PC-3 (cell line): ENCODE measurements at regions of chr3 and their contacts with region 1.

Region 1: DNA sequence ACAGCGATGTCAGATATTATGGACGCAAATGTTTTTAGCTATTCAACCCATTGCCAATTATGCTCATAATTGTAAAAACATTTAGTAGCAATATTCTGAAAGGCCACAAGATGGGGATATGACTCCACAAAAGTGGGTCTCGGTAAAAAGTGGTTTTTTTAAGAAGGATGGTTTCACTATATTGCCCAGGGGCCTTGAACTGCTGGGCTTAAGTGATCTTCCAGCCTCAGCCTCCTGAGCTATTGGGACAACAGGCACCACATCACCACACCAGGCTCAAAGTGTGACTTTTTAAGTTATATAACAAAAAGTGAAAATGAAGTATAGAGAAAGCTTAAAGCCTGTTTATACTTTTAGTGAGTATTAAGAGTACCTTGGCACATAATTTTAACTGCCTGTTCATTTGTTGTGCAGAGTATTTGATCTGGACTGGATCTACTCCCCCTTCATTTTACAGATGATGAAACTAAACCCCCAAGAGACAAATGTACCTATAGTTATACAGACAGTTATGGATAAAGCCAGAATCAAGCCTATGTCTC is 9.4 kb downstream of the NAA50 start:
- DNase-seq: peak; percentile 85
- ATAC-seq: peak; percentile 77
- H3K4me3 ChIP-seq: no peak overlapping the region
- H3K27ac ChIP-seq: no peak overlapping the region
- H3K4me1 ChIP-seq: no peaks in the 10 kb centered on the region
- H3K27me3 ChIP-seq: no peaks in the 10 kb centered on the region
- CTCF ChIP-seq: peak; percentile 83

Region 2: DNA sequence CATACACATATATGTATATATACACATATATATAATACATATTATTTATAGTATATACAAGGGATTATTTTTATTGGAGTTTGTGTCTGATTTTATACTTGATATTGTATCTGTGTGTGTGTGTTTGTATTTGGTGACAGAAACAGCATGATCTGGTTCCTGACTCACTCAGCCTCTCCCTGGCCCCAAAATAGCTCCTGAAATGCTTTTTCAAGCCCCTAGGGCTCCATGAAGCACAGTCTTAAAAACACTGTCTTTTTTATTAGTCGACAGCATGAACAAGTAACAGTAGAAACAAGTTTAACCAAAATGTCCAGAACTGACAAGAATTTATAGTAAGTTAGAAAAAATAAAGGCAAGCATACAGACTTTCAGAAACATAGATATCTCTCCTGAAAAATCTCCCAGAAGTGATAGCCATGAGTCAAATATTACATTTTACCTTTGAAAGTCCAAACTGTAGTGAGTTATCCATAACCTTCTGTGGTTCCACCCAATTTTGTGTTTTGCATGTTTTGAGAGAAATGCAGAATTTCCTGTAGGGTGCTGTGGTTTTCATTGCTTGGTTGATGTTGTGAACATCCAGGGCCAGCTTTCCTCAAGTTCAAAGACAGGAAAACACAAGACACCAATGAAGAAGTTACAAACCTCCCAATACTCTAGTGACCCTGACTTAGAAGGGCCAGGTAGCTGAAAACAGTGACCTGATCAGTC is 997.2 kb before region 1 on chr3:
- CTCF ChIA-PET with region 1: no interaction called
- POLR2A ChIA-PET with region 1: no interaction called
- intact Hi-C with region 1: no loop called
- DNase-seq: peak; percentile 63
- ATAC-seq: peak; percentile 49
- H3K4me3 ChIP-seq: no peak overlapping the region
- H3K27ac ChIP-seq: peak overlapping the region; percentile 5; the same call in 1 of the 2 replicates
- H3K4me1 ChIP-seq: peaks cover 14% of the 10 kb centered on the region
- H3K27me3 ChIP-seq: no peaks in the 10 kb centered on the region
- CTCF ChIP-seq: no peak

Region 3: GRCh38 chr3:113514265-113514769 is 222.3 kb before region 1 on chr3:
- CTCF ChIA-PET with region 1: no interaction called
- POLR2A ChIA-PET with region 1: no interaction called
- intact Hi-C with region 1: no loop called
- DNase-seq: no peak
- ATAC-seq: no peak; the same call in 1 of the 2 replicates
- H3K4me3 ChIP-seq: peak overlapping the region; percentile 89
- H3K27ac ChIP-seq: peak overlapping the region; percentile 81
- H3K4me1 ChIP-seq: peaks cover 19% of the 10 kb centered on the region
- H3K27me3 ChIP-seq: no peaks in the 10 kb centered on the region
- CTCF ChIP-seq: no peak

Region 4: GRCh38 chr3:113696658-113697499 is 39.7 kb before region 1 on chr3:
- CTCF ChIA-PET with region 1: no interaction called
- POLR2A ChIA-PET with region 1: no interaction called
- intact Hi-C with region 1: no loop called
- DNase-seq: peak; percentile 99
- ATAC-seq: peak; percentile 82
- H3K4me3 ChIP-seq: peak overlapping the region; percentile 73
- H3K27ac ChIP-seq: no peak overlapping the region
- H3K4me1 ChIP-seq: peaks cover 14% of the 10 kb centered on the region
- H3K27me3 ChIP-seq: no peaks in the 10 kb centered on the region
- CTCF ChIP-seq: no peak

Region 5: DNA sequence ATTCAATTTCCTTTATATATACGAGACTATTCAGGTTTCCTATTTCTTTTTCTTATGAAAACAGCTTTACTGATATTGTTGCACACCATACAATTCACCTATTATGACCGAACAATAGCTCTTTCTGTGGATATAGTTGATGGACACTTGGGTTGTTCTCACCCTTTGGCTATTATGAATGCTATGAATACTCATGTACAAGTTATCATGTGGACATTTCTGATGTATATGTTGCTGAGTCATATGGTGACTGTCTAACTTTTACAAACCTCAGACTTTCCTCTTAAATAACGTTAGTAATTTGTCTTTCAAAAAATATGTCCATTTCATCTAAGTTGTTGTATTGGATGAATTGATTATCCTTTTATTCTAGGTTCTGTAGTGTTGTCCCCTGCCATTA is 24.5 kb before region 1 on chr3:
- CTCF ChIA-PET with region 1: no interaction called
- POLR2A ChIA-PET with region 1: interaction called, 13 read pairs
- intact Hi-C with region 1: no loop called
- DNase-seq: peak; percentile 65
- ATAC-seq: peak; percentile 83
- H3K4me3 ChIP-seq: no peak overlapping the region
- H3K27ac ChIP-seq: peak overlapping the region; percentile 50
- H3K4me1 ChIP-seq: peaks cover 11% of the 10 kb centered on the region; the same call in 1 of the 2 replicates
- H3K27me3 ChIP-seq: no peaks in the 10 kb centered on the region
- CTCF ChIP-seq: no peak

Region 6: DNA sequence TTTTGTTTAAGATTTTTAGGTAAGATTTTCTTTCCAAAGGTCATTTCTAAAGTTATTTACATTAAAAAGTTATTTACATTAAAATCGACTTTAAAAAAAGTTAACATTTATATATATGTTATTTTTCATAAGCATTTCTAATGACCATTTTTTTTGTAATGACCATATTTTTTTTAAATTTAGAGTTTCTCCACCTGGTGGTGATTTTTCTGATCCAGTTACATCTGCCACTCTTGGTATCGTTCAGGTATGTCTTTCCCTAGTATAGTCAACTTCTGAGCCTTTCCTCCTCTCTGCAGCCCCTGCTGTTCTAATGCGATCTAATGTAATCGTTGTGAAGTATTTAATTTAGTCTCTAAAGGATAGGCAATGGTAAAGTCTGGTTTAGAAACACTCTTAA is 59.1 kb after region 1 on chr3:
- CTCF ChIA-PET with region 1: no interaction called
- POLR2A ChIA-PET with region 1: no interaction called
- intact Hi-C with region 1: loop called (anchors 2 kb)
- DNase-seq: no peak
- ATAC-seq: no peak
- H3K4me3 ChIP-seq: no peak overlapping the region
- H3K27ac ChIP-seq: no peak overlapping the region
- H3K4me1 ChIP-seq: no peaks in the 10 kb centered on the region
- H3K27me3 ChIP-seq: no peaks in the 10 kb centered on the region
- CTCF ChIP-seq: 0 out of 2 replicates have a peak, but pooled peaks have one; percentile 12

Region 7: GRCh38 chr3:113838631-113839209 is 102.1 kb after region 1 on chr3 and contains the start of gene GRAMD1C:
- CTCF ChIA-PET with region 1: interaction called, 8 read pairs
- POLR2A ChIA-PET with region 1: no interaction called
- intact Hi-C with region 1: loop called (anchors 1 kb)
- DNase-seq: peak; percentile 91
- ATAC-seq: peak; percentile 94
- H3K4me3 ChIP-seq: peak within 1 kb of the TSS; percentile 80
- H3K27ac ChIP-seq: no peak within 1 kb of the TSS
- H3K4me1 ChIP-seq: peaks cover 17% of the 10 kb centered on the region
- H3K27me3 ChIP-seq: no peaks in the 10 kb centered on the region
- CTCF ChIP-seq: peak; percentile 90
- total RNA-seq, gene GRAMD1C: 2.8 and 4.5 TPM in 2 replicates

Region 8: GRCh38 chr3:113885050-113885449 is 148.4 kb after region 1 on chr3:
- CTCF ChIA-PET with region 1: no interaction called
- POLR2A ChIA-PET with region 1: no interaction called
- intact Hi-C with region 1: no loop called
- DNase-seq: no peak
- ATAC-seq: no peak
- H3K4me3 ChIP-seq: no peak overlapping the region
- H3K27ac ChIP-seq: no peak overlapping the region
- H3K4me1 ChIP-seq: no peaks in the 10 kb centered on the region
- H3K27me3 ChIP-seq: no peaks in the 10 kb centered on the region
- CTCF ChIP-seq: no peak